ENCODE measurements at regions of chr9 and their contacts with region 1.

Region 1: GRCh38 chr9:115694014-115694413 is 459.6 kb upstream of the PAPPA start:
- DNase-seq: no peak
- ATAC-seq: peak; percentile 37
- H3K4me3 ChIP-seq: no peak overlapping the region
- H3K27ac ChIP-seq: no peak overlapping the region
- H3K4me1 ChIP-seq: no peaks in the 10 kb centered on the region
- H3K27me3 ChIP-seq: no peaks in the 10 kb centered on the region

Region 2: DNA sequence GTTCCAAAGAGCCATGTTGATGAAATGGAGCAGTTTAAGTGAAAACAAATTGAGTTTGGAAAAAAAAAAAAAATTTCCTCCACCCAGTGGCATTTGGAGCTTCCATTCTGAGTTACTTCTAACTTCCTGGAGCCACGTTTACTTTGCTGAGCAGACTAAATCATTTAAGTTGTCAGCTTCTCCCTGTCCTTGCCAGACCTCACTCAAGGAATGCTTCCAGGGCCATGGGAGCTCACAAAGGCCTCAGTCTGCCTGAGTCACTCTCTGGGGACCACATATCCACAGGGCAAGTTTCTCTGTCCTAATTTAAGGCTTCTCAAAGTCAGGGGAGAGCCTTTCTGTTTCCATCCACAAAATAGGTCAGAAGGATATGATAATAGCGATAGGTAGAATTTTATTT is 365.8 kb before region 1 on chr9:
- intact Hi-C with region 1: no loop called
- DNase-seq: peak; percentile 77 to 82
- ATAC-seq: peak; percentile 79
- H3K4me3 ChIP-seq: no peak overlapping the region
- H3K27ac ChIP-seq: no peak overlapping the region
- H3K4me1 ChIP-seq: peaks cover 0 to 3% of the 10 kb centered on the region in 2 donors
- H3K27me3 ChIP-seq: no peaks in the 10 kb centered on the region

Region 3: GRCh38 chr9:115498303-115498702 is 195.7 kb before region 1 on chr9:
- intact Hi-C with region 1: no loop called
- DNase-seq: no peak
- ATAC-seq: no peak
- H3K4me3 ChIP-seq: no peak overlapping the region
- H3K27ac ChIP-seq: no peak overlapping the region
- H3K4me1 ChIP-seq: peaks cover 7 to 13% of the 10 kb centered on the region in 2 donors
- H3K27me3 ChIP-seq: no peaks in the 10 kb centered on the region

Region 4: DNA sequence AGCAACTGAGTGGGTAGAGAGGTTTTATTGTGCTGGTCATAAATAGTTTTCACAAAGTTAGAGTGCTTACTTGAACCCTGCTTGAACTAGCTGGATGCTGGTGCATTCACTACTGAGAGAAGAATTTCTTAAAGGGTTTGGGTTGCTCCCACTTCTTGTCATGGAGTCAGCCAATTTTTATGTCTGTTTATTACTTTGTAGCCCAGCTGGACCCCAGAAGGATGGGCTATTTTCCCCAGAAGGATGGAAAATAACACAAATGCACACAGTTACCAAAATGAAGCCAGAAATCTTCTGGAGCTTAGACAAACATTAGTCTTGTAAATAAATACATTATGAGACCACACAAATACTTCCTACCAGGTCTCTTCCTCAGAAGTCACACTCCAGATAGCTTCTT is 95.3 kb before region 1 on chr9:
- intact Hi-C with region 1: loop called (anchors 2 to 5 kb)
- DNase-seq: no peak
- ATAC-seq: no peak
- H3K4me3 ChIP-seq: no peak overlapping the region
- H3K27ac ChIP-seq: no peak overlapping the region
- H3K4me1 ChIP-seq: peaks cover 3 to 5% of the 10 kb centered on the region in 2 donors
- H3K27me3 ChIP-seq: no peaks in the 10 kb centered on the region

Region 5: DNA sequence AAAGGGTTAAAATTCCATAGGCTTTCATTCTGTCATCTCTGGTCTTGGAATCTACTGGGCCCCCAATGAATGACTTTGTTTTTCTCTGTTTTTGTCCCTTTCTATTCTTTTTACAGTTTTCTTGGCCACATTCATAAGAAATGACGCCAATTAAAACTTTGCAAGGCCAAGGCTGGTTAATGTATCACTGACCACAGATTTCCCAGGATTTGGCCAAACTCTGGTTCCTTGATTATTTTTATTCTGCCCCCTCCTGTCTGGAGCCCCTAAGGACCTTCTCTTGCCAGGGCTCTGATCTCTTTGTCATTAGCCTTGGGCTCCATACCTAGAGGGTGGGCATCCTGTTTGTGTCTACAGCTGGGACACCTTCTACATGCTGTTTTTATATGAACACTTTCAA is 70.6 kb after region 1 on chr9:
- intact Hi-C with region 1: loop called in 1 of 2 experiments (anchors 10 kb)
- DNase-seq: no peak
- ATAC-seq: peak; percentile 81
- H3K4me3 ChIP-seq: no peak overlapping the region
- H3K27ac ChIP-seq: peak overlapping the region; percentile 89 to 96
- H3K4me1 ChIP-seq: peaks cover 1 to 16% of the 10 kb centered on the region in 2 donors
- H3K27me3 ChIP-seq: no peaks in the 10 kb centered on the region